ENCODE measurements at regions of chr14 and their contacts with region 1.

Region 1: GRCh38 chr14:103003850-103004249 is 53.5 kb downstream of the CDC42BPB start:
- DNase-seq: peak; percentile 81

Region 2: DNA sequence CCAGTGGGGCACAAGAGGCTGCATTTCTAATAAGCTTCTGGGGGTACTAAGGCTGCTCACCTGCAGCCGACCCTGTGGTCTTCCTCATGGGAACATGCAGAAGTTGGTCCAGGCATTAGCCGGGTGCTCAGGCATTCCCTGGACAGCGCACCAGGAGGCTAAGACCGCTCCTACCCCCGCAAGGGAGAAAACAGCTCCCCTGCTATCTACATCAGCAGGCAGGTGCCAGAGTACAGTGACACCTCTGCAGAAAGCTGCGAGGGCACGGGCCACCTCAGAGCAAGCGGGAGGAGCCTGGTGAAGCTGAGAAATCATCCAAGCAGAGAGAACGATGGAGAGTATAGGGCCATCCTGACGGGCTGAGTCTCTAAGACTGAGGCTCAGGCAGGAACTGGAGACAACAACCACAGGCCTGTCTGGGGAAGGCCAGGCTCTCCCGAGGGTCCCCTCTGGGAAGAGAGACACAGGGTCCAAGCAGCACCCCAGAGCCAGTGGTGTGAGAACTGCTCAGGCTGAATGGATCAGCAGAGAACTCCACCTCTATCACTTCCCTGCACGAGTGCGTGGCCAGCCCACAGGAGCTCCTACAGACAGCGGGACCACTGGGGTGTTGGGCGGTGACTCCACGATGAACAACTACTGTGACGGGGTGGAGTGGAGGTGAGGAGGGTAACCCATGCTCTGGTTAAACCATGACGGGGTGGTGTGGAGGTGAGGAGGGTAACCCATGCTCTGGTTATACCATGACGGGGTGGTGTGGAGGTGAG is 19.3 kb before region 1 on chr14:
- intact Hi-C with region 1: loop called in 1 of 2 experiments (anchors 1 kb)
- DNase-seq: no peak

Region 3: GRCh38 chr14:103257201-103257962 is 253.5 kb after region 1 on chr14:
- intact Hi-C with region 1: no loop called
- DNase-seq: peak; percentile 20